OCI-LY7 (cell line): ENCODE measurements at regions of chr7 and their contacts with region 1.

Region 1: DNA sequence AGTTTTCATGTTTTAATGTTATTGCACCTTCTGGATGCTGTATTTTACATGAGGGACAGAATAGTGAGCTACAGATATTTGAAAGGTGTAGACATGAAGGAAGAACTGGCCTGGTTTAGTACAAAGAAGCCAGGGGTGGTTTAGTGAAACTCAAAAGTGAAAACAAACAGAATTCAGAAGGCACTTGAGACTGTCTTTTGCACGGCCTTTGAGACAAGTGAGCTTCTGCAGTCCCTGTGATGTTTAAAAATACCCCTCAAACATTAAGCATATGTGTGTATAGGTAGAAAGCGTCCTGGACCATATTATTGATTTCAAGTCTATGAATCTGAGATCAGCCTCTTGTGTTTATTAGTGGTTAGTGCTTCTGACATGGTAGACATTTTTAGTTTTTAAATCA is 118.9 kb downstream of the CDK14 start:
- DNase-seq: peak; percentile 58
- H3K4me3 ChIP-seq: peak overlapping the region; percentile 86
- H3K27ac ChIP-seq: peak overlapping the region; percentile 92
- H3K4me1 ChIP-seq: peaks cover 73% of the 10 kb centered on the region
- CTCF ChIP-seq: no peak

Region 2: DNA sequence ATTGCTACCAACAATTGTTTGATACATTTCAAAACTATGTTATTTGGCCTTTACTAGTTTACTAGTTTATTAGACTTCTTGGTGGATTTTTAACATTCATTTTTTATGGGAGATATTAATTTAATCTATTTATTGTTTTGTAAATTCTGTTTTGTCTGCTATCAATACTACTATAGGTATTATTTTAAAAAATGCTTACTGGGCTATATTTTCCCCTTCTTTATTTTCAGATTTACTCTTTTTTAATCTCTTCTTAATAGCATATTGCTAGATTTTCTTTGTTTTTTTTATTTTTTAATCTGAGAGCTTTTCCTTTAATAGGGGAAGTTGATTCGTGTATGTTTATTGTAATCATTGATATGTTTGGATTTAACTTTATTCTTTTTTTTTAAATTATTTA is 28.6 kb after region 1 on chr7:
- CTCF ChIA-PET with region 1: no interaction called
- POLR2A ChIA-PET with region 1: interaction called, 11 read pairs
- intact Hi-C with region 1: no loop called
- DNase-seq: no peak
- H3K4me3 ChIP-seq: no peak overlapping the region
- H3K27ac ChIP-seq: no peak overlapping the region
- H3K4me1 ChIP-seq: peaks cover 52% of the 10 kb centered on the region
- CTCF ChIP-seq: no peak

Region 3: DNA sequence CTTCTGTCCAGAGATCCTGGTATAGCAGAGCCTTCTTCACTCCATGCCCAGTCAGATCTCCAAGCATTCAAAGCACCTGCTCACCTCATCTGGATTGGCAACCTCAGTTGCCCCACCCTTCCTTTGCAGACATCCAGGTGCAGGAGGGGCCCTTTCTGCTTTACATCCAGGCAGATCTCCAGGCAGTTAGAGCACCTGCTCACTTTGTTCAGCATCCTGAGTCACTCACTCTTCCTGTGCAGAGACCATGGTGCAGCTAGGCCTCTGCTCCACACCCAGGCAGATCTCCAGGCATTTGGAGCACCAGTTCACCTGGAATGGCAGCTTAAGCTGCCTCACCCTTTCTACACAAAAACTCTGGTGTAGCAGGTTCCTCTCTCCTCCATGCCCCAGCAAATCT is 34.2 kb after region 1 on chr7:
- CTCF ChIA-PET with region 1: interaction called, 3 read pairs
- POLR2A ChIA-PET with region 1: interaction called, 11 read pairs
- intact Hi-C with region 1: no loop called
- DNase-seq: peak; percentile 75
- H3K4me3 ChIP-seq: no peak overlapping the region
- H3K27ac ChIP-seq: peak overlapping the region; percentile 61
- H3K4me1 ChIP-seq: peaks cover 73% of the 10 kb centered on the region
- CTCF ChIP-seq: no peak

Region 4: DNA sequence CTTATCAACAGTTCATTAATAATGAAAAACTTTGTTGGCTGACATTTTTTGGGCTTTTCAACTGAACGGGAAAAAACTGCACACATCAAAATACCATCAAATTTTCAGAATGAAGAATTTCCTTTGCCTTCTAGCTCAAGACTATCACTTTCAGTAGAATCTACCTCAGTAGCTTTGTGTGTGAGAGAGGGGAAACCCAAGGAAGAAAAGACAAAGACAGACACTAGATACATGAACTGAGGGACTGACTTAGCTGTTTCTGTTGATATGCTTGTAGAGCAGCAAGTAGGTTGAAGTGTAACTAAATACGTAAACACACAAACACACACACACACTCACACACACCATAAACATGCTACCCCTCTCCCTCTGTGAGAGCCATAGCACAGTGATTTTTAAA is 138.1 kb after region 1 on chr7:
- CTCF ChIA-PET with region 1: no interaction called
- POLR2A ChIA-PET with region 1: no interaction called
- intact Hi-C with region 1: no loop called
- DNase-seq: no peak
- H3K4me3 ChIP-seq: no peak overlapping the region
- H3K27ac ChIP-seq: no peak overlapping the region
- H3K4me1 ChIP-seq: no peaks in the 10 kb centered on the region
- CTCF ChIP-seq: no peak